A673 (cell line): ENCODE measurements at regions of chr3 and their contacts with region 1.

Region 1: DNA sequence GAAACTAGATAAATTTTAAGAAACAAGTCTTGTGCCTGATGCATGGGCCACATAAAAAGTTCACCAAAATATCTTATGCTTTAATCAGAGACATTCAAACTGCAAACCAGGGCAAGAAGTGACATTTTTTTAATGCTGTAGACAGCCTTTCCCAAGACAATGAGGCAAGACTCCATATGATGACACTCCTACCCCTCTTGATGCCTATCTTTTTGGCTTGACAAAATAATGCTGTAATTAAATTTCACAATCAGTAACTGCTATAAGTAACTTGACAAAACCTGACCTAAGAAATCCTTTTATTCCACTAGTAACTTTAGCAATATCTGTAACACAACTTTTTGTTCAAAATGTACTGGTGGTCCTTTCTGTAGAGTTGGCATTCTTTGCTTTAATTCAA is 48.7 kb downstream of the ECT2 start:
- DNase-seq: no peak
- H3K4me3 ChIP-seq: no peak overlapping the region
- H3K27ac ChIP-seq: no peak overlapping the region
- H3K4me1 ChIP-seq: no peaks in the 10 kb centered on the region
- H3K27me3 ChIP-seq: no peaks in the 10 kb centered on the region
- CTCF ChIP-seq: no peak

Region 2: GRCh38 chr3:172710664-172711453 is 88.4 kb before region 1 on chr3 and contains the start of gene NCEH1:
- CTCF ChIA-PET with region 1: no interaction called
- POLR2A ChIA-PET with region 1: interaction called, 17 read pairs
- intact Hi-C with region 1: no loop called
- DNase-seq: peak; percentile 93
- H3K4me3 ChIP-seq: peak within 1 kb of the TSS; percentile 60
- H3K27ac ChIP-seq: no peak within 1 kb of the TSS
- H3K4me1 ChIP-seq: no peaks in the 10 kb centered on the region
- H3K27me3 ChIP-seq: no peaks in the 10 kb centered on the region
- CTCF ChIP-seq: peak; percentile 71
- total RNA-seq, gene NCEH1: 3.3 and 3.5 TPM in 2 replicates

Region 3: GRCh38 chr3:173902871-173903270 is 1103.6 kb after region 1 on chr3:
- CTCF ChIA-PET with region 1: no interaction called
- POLR2A ChIA-PET with region 1: no interaction called
- intact Hi-C with region 1: no loop called
- DNase-seq: no peak
- H3K4me3 ChIP-seq: no peak overlapping the region
- H3K27ac ChIP-seq: no peak overlapping the region
- H3K4me1 ChIP-seq: no peaks in the 10 kb centered on the region
- H3K27me3 ChIP-seq: no peaks in the 10 kb centered on the region
- CTCF ChIP-seq: no peak